Cardiac septum (tissue), 1 donor: ENCODE measurements at regions of chr10 and their contacts with region 1.

Region 1: DNA sequence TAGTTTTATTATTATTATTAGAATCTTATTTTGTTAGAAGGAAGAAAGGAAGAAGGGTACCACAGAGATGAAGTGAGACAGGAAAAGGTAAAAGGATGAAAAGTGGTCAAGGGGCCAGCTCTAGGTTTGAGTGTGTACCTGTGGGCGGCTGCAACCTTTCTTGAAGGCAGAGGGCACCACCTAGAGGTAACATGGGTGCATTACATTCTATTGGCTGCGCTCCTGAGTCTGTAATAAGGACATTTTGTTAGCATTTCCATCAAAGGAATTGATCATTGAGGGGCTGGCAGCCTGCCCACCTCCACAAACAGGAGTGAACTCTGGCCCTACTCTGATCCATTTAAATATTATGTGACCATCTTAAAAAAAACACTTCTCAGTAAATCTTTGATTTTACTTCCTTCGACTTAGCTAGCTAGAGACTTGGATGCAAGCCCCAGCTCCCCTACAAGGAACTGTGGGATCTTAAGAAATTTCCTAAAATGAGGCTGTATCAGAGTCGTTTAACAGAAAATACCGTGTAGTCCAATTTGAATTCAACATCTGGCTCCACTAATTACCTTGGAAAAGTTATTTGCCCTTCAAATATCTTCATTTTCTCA is 610.4 kb downstream of the IPMK start:
- DNase-seq: no peak

Region 2: DNA sequence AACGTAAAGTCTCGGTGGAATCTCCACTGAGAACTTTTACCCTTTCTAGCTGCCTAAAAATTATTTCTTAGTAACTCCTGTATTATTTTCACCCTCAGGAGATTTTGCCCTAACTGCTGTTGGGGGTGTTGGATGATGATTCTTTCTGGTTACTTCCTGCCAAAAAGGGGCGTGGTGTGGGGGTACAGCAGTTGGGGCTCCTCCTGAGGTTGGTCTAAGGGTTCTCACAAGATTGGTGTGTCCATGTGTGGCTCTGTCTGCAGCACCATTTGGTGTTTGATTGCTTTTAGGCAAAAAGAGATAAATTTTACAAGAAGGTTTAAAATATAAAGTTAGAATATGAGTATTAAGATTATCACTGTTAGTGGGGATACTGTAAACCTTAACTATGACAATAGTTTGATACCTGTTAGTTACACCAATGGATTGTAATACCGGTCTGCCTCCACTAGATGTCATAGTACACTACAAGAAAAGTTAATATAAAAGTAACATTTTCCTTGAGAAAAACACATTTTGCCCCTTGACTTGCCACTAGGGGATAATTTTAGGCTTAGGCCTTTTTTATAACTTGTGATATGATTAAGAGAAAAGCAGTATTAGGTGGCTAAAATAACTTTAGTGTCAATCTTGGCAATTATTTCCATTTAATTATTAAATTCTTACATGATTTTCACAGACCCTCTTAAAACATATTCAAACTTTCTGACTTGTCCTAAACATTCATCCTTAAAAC is 318.3 kb before region 1 on chr10:
- intact Hi-C with region 1: loop called (anchors 10 kb)
- DNase-seq: no peak

Region 3: DNA sequence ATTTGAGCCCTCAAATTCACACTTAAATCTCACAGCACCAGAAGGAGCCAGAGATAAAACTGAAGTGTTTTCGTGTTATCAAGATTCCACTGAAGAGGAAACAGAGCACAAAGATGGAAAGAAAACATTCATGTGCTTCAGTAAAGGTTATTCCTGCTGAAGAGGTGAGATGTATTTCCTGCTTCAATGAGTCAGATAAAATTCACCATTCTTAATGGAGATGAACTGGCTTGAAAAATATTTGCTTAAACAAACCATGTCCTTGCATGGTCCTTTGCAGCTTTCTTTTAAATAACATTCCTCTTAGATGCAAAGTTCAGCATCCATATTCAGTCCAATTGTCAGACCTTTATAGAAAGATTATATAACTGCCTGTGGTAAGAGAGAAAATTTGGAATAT is 316.2 kb after region 1 on chr10:
- intact Hi-C with region 1: no loop called
- DNase-seq: no peak